Activated CD8-positive, alpha-beta T cell treated with anti-CD3 and anti-CD28 coated beads for 36 hours (primary cell): ENCODE measurements at regions of chr5 and their contacts with region 1.

Region 1: GRCh38 chr5:139633295-139634027 is 14.7 kb upstream of the CXXC5 start:
- DNase-seq: peak; percentile 73
- ATAC-seq: peak; percentile 31
- H3K4me3 Mint-ChIP-seq: no peak overlapping the region
- H3K27ac Mint-ChIP-seq: peak overlapping the region; percentile 43
- H3K4me1 Mint-ChIP-seq: peaks cover 46% of the 10 kb centered on the region
- H3K27me3 Mint-ChIP-seq: no peaks in the 10 kb centered on the region
- CTCF ChIP-seq: peak; percentile 91

Region 2: GRCh38 chr5:139619861-139620260 is 13.6 kb before region 1 on chr5:
- CTCF ChIA-PET with region 1: interaction called, 29 read pairs
- POLR2A ChIA-PET with region 1: interaction called, 3 read pairs
- intact Hi-C with region 1: no loop called
- DNase-seq: no peak
- ATAC-seq: no peak
- H3K4me3 Mint-ChIP-seq: no peak overlapping the region
- H3K27ac Mint-ChIP-seq: peak overlapping the region; percentile 49
- H3K4me1 Mint-ChIP-seq: peaks cover 4% of the 10 kb centered on the region
- H3K27me3 Mint-ChIP-seq: no peaks in the 10 kb centered on the region
- CTCF ChIP-seq: no peak

Region 3: GRCh38 chr5:139670369-139671095 is 37.1 kb after region 1 on chr5:
- CTCF ChIA-PET with region 1: interaction called, 65 read pairs
- POLR2A ChIA-PET with region 1: interaction called, 13 read pairs
- intact Hi-C with region 1: loop called (anchors 5 kb)
- DNase-seq: peak; percentile 77
- ATAC-seq: peak; percentile 50
- H3K4me3 Mint-ChIP-seq: peak overlapping the region; percentile 79
- H3K27ac Mint-ChIP-seq: peak overlapping the region; percentile 79
- H3K4me1 Mint-ChIP-seq: peaks cover 48% of the 10 kb centered on the region
- H3K27me3 Mint-ChIP-seq: no peaks in the 10 kb centered on the region
- CTCF ChIP-seq: peak; percentile 50

Region 4: DNA sequence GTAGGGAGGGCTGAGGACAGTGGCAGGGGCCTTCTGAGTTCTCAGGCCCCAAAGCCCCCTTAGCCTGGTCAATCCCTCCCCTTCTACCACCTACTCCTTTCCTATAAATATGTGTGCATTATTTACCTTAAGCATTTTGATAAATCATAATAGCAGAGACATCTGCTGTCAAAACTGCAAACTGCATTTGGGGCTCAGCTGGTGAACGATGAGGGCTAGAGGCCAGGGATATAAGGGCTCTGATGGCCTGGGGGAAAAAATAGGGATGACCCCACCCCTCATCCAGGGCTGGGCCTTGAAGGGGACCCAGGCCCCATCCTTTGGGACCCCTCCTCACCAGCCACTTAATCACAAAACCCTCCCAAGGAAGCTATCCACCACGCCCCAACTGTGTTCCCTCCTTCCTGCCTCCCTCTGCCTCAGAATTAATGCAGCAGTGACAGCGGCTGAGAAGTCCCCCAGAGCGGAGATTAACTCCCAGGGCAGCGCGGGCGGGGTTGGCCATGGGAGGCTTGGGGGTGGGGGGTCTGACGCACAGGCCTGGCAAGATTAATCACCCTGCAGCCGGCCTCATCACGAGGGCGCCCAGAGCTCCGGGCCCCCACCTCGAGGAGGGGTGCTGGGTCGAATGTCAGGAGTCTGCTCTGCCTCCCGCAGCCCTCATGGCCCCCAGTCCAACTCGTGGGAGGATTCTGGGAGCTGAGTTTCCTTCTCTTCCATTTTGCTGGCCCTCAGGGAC is 56.8 kb after region 1 on chr5:
- CTCF ChIA-PET with region 1: interaction called, 94 read pairs
- POLR2A ChIA-PET with region 1: interaction called, 14 read pairs
- intact Hi-C with region 1: loop called (anchors 2 kb)
- DNase-seq: peak; percentile 48
- ATAC-seq: peak; percentile 66
- H3K4me3 Mint-ChIP-seq: no peak overlapping the region
- H3K27ac Mint-ChIP-seq: no peak overlapping the region
- H3K4me1 Mint-ChIP-seq: peaks cover 7% of the 10 kb centered on the region
- H3K27me3 Mint-ChIP-seq: no peaks in the 10 kb centered on the region
- CTCF ChIP-seq: peak; percentile 53

Region 5: DNA sequence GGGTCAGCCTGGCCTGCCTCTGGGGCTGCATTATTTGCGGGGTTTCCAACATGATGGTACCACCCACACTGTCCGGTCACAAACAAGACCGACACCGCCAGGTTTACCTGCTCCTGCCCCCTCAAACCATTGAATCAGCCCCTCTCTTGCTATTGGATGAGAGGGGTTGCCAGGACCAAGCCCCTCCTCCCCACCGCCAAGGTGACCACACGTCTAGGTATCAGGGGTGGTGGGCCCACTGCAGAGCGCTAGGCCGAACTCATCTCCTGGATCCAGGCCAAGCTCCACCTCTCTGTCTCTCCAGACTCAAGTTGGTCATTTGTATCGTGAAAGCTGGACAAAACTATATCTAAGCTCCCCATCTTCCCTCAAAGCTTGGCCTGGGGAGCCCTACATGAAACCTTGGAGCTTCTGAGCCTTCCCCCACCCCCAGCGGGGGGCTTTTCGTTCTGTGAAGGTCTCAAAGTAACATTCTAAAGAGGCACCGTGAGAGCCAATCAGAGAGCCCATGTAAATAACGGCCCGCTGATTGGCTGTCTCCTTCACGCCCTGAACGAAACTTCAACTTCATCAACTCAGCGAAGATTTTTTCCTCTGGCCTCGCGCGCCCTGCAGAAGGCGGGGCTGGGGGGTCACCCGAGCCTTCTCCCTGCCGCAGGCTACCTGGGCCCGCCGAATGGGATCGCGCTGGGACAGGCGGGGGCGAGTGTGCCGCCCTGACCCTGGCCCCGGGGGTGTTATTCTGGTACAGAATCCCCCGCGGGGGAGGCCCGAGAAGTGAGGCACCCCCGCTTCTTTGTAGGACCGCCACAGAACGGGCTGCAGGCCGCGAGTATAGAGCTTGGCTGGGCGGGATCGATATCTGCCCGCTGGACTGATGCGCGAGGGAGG is 112.6 kb after region 1 on chr5:
- CTCF ChIA-PET with region 1: interaction called, 14 read pairs
- POLR2A ChIA-PET with region 1: interaction called, 5 read pairs
- intact Hi-C with region 1: loop called (anchors 5 kb)
- DNase-seq: peak; percentile 79
- ATAC-seq: peak; percentile 22
- H3K4me3 Mint-ChIP-seq: peak overlapping the region; percentile 68
- H3K27ac Mint-ChIP-seq: peak overlapping the region; percentile 92
- H3K4me1 Mint-ChIP-seq: peaks cover 36% of the 10 kb centered on the region
- H3K27me3 Mint-ChIP-seq: peaks cover 8% of the 10 kb centered on the region
- CTCF ChIP-seq: no peak